Naive thymus-derived CD8-positive, alpha-beta T cell (primary cell): ENCODE measurements at regions of chr3 and their contacts with region 1.

Region 1: DNA sequence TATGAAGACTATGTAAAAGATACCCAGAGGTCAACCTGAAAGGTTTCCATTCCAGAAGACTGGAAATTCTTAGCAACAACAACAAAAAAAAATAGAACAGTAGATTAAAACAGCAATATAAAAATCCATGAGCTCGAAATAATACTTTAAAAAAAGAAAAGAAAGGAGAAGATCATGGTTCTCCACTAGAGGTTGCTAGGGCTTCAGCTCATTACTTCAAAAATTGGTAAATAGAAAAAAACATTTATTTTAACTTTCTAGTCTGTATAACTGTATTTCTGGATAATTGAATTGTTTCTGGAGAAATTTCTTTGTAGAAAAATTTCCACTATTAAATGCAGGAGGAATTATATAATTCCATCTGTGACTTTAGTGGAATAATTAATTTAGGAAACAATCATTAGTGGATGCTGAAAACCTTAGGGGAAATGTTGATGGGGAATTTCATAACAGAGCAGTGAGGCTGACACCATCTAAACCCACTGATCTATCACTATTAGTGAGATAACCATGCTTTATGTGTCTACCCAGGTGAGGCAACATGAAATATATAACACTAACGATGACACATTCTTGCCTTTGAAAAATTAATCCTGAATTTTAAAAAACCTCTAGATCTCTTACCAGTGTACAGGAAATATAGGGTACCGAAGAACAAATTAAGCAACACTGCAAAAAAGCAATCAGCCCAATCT is 62.5 kb upstream of the SNRK start:
- DNase-seq: peak in 3 of 10 donors; percentile 41 to 52 (median 42)
- ATAC-seq: peak in 1 of 2 donors; percentile 23
- H3K4me3 Mint-ChIP-seq: peak overlapping the region in 7 of 10 donors; percentile 15 to 82 (median 51)
- H3K27ac Mint-ChIP-seq: peak overlapping the region; percentile 36 to 95 (median 85)
- H3K4me1 Mint-ChIP-seq: peaks cover 34 to 69% (median 62%) of the 10 kb centered on the region in 4 donors
- H3K27me3 Mint-ChIP-seq: no peaks in the 10 kb centered on the region

Region 2: GRCh38 chr3:43286115-43286840 is 62.5 kb after region 1 on chr3 and contains the start of gene SNRK:
- POLR2A ChIA-PET with region 1: interaction called, 16 read pairs
- DNase-seq: peak; percentile 81 to 98 (median 94)
- ATAC-seq: peak; percentile 69 to 81
- H3K4me3 Mint-ChIP-seq: peak within 1 kb of the TSS; percentile 94 to 100 (median 99)
- H3K27ac Mint-ChIP-seq: peak within 1 kb of the TSS; percentile 96 to 100 (median 100)
- H3K4me1 Mint-ChIP-seq: peaks cover 30 to 42% (median 35%) of the 10 kb centered on the region in 4 donors
- H3K27me3 Mint-ChIP-seq: peaks cover 0 to 2% (median 0%) of the 10 kb centered on the region in 5 donors
- polyA plus RNA-seq, gene SNRK: 71.1 to 97.5 (median 90.6) TPM

Region 3: DNA sequence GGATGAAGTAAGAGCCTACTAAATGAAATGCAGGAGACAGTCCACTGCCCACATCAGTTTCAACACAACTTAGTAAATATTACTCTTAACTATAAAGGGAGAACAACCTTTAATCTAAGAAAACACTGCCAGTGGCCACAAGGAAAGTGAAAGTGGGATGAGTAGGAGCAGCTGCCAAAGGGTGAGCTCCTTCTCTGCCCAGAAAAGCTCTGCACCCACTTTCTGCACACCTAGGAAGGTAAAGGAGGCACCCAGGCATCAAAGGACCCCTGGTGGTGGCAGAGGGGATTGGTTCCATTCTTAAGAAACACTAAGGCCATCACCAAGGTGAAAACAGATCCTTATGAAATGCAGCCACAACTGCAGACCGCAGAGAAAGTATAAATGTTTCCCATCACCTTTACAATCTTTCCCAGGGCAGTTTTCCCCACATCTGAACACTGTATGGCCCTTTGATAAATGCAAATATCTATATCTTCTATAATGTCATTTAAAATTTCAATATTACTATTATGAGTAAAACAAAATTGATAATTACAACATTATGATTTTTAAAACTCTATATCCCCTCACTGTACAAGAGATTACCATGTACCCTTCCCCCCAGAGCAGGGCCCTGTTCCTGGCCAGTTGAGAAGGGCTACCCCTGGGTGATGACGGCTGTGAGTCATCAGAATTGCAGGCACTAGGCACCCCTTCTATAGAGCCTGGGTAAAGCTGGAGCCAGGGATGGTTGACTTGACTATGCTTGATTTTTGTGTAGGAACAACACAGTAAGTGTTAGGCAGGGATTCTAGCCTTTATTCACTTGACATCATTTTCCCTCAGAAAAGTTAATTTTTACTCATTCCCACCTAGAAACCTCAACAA is 154.5 kb after region 1 on chr3:
- POLR2A ChIA-PET with region 1: interaction called, 11 read pairs
- DNase-seq: peak; percentile 48 to 86 (median 72)
- ATAC-seq: peak; percentile 97 to 98
- H3K4me3 Mint-ChIP-seq: peak overlapping the region in 3 of 10 donors; percentile 24 to 29 (median 26)
- H3K27ac Mint-ChIP-seq: peak overlapping the region; percentile 70 to 91 (median 82)
- H3K4me1 Mint-ChIP-seq: peaks cover 18 to 37% (median 25%) of the 10 kb centered on the region in 4 donors
- H3K27me3 Mint-ChIP-seq: no peaks in the 10 kb centered on the region

Region 4: GRCh38 chr3:43418601-43419272 is 194.9 kb after region 1 on chr3:
- POLR2A ChIA-PET with region 1: no interaction called
- DNase-seq: no peak
- ATAC-seq: no peak
- H3K4me3 Mint-ChIP-seq: no peak overlapping the region
- H3K27ac Mint-ChIP-seq: no peak overlapping the region
- H3K4me1 Mint-ChIP-seq: peaks cover 4 to 7% (median 5%) of the 10 kb centered on the region in 4 donors
- H3K27me3 Mint-ChIP-seq: no peaks in the 10 kb centered on the region

Region 5: DNA sequence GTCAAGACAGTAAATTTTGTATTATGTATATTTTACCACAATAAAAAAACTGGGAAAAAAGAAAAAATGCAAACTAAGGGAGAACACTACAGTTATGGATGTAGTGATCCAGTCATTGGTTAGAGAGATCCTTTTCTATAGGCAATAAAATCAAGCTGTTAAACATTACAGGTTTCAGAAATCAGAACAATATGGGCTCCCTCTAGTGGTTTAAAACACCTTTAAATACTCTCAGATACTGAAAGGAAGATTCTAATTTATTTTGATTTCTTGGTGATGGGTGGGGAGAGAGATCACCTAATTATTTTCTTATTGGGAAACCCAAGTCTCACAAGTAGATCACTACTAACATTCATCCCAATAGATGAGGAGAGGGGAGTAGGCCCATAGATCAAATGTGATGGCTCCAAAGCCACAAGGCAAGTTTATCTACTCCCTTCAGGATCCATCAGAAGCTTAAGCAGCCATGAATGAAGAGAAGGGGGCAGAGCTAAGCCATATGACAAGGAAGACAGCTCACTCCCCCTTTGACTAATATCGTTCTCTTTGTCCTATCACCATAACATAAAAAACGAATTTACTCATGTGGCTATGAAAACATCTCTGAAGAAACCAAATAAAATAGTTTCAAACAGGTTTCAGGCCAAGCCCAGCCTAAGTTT is 279.4 kb after region 1 on chr3:
- POLR2A ChIA-PET with region 1: interaction called, 10 read pairs
- DNase-seq: peak in 3 of 10 donors; percentile 60 to 68 (median 64)
- ATAC-seq: peak; percentile 58 to 62
- H3K4me3 Mint-ChIP-seq: no peak overlapping the region
- H3K27ac Mint-ChIP-seq: peak overlapping the region in 8 of 10 donors; percentile 12 to 57 (median 24)
- H3K4me1 Mint-ChIP-seq: peaks cover 30 to 58% (median 56%) of the 10 kb centered on the region in 4 donors
- H3K27me3 Mint-ChIP-seq: no peaks in the 10 kb centered on the region